ENCODE measurements at regions of chr2 and their contacts with region 1.

Region 1: DNA sequence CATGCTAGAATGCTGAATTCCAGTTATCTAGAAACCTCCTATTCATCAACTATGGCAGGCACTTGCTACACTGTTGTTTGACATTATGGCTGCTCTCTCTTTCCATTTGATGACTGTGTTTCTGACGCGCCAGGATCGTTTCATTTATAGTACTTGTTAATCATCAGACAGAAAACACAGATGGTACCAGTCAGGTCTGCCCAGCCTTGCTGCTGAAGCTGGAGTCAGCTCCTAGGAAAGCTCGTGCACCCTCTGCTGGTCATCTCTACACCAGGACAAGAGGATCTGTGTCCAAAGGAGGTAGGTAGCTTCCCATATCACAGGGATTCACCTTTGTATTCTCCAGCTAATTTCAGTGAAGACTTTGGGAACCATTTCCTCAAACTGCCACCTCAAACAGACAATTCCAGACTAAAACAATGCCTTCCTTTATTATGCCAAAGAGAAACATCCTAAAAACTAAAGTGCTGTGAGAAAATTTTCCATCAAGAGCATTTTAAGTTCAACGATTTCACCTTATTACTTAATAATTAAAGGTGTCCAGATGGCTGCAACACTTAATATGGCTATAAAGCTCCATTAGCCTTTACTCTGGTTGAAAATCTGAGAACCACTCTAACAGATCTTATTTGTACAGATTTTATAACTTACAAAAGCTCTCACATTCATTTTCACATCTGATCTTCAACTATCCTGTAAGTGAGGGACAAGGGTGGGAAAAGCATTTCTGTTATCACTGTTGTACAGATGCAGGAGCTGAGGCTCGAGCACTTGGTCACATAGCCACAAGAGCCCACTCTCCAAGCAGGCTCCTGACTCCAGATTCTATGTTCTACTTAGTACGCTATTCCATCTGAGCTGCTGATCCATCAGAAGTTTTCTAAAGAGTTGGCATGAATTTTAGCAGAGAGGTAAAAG is 17.5 kb downstream of the METTL8 start:
- DNase-seq: peak; percentile 96
- H3K4me3 Mint-ChIP-seq: peak overlapping the region; percentile 32
- H3K27ac Mint-ChIP-seq: peak overlapping the region; percentile 92
- H3K4me1 Mint-ChIP-seq: peaks cover 38% of the 10 kb centered on the region
- H3K27me3 Mint-ChIP-seq: no peaks in the 10 kb centered on the region

Region 2: GRCh38 chr2:171173089-171173488 is 243.2 kb before region 1 on chr2:
- CTCF ChIA-PET with region 1: interaction called, 3 read pairs
- intact Hi-C with region 1: loop called (anchors 1 kb)
- DNase-seq: peak; percentile 57
- H3K4me3 Mint-ChIP-seq: no peak overlapping the region
- H3K27ac Mint-ChIP-seq: no peak overlapping the region
- H3K4me1 Mint-ChIP-seq: peaks cover 14% of the 10 kb centered on the region
- H3K27me3 Mint-ChIP-seq: no peaks in the 10 kb centered on the region

Region 3: DNA sequence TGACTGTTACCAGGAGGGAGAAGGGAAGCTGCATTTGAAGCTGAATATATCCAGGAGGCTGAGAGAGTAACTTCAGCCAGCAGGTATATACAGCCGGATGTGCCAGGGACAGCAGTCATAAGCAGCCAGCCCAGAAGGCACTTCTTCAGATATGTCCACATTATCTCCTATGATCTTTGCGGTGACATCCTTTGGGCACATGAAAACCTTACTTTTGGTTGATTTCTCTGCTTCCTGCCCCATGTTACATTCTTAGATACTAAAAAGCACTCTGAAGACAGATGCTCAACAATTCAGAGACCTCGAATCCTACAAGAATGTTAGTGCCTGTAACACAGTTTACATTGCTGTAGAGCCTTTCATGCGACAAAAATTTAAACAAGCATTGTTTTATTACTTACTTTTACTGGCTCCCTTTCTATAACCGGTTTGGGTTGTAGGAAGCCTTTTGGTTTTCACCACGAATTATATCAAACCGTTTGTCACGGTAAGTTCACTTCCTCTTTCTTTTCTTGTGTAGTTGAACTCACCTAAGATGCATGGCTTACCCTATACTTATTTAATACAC is 205.3 kb before region 1 on chr2:
- CTCF ChIA-PET with region 1: no interaction called
- intact Hi-C with region 1: loop called (anchors 1 kb)
- DNase-seq: peak; percentile 60
- H3K4me3 Mint-ChIP-seq: peak overlapping the region; percentile 51
- H3K27ac Mint-ChIP-seq: peak overlapping the region; percentile 56
- H3K4me1 Mint-ChIP-seq: peaks cover 13% of the 10 kb centered on the region
- H3K27me3 Mint-ChIP-seq: no peaks in the 10 kb centered on the region

Region 4: DNA sequence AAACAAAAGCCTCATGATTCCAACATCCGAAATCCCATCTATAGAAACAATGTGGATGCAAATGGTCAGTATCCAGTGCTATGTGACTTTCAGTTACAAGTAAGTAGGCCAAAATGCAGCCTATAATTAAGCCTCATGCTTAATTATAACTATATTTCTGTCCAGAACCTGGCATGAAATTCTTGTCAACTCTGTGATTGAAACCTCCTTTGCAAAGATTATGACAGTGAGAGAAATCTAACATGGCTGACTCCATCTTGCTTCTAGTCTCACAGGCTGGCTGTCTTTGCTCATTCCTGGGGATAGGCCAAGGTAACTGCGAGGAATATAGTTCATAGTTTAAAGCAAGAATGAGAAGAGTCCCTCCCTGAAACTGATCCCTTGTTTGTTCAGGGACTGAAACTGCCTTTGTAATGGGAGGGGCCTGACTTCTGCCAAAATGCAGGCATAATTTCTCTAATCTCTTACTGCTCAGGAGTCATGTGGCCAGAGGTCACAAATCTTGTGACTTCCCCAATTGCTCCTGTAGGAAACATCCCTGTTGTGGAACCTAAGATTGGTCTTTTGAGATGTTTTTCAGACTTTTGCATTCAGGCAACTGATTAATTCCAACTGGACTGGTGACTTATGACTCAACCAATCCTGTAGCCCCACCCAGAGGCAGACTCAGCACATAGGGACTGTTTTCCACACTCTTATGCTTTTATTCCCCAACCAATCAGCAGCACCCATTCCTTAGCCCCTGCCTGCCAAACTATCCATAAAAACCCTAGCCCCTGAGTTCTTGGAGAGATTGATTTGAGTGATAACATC is 171.1 kb before region 1 on chr2:
- CTCF ChIA-PET with region 1: interaction called, 5 read pairs
- intact Hi-C with region 1: loop called (anchors 1 kb)
- DNase-seq: peak; percentile 32
- H3K4me3 Mint-ChIP-seq: no peak overlapping the region
- H3K27ac Mint-ChIP-seq: no peak overlapping the region
- H3K4me1 Mint-ChIP-seq: peaks cover 40% of the 10 kb centered on the region
- H3K27me3 Mint-ChIP-seq: no peaks in the 10 kb centered on the region

Region 5: DNA sequence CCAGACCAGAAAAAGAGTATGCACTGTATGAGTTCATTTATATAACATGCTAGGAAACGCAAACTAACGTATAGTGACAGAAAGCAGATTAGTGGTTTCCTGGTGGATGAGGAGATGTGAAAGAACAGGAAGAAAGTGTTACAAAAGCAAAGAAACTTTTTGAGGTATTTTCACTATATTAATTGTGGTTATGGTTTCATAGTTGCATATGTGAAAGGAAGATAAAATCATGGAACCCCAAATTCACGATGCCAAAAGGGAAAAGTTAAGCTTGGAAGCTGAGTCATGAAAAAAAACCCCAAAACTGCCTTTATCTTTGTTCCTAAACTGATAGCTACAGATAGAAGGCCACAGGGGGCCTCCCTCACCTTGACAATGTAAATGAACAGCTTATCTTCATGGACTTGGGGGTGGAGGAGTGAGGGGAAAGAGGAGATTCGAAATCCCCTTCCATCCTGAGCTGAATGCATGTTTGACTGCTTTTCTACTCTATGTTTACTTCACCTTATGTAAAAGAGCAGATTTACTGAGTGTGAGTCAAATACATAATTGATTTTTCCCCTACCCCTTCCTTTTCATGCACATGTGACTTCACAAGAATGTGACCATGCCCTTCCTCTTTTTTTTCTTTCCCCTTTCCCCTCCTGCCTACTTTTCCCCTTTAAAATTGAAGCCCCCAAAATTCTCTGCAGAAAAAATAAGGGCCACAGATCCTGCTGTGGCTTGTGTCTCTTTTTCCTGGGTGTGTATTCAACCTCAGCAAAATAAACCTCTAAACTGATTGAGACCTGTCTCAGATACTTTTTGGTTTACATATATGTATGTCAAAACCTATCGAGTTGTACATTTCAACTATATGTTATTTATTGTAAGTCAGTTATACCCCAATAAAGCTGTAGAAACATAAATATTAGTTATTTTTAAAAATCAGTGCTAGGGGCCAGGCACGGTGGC is 155.5 kb before region 1 on chr2:
- CTCF ChIA-PET with region 1: interaction called, 10 read pairs
- intact Hi-C with region 1: loop called (anchors 1 kb)
- DNase-seq: peak; percentile 70
- H3K4me3 Mint-ChIP-seq: no peak overlapping the region
- H3K27ac Mint-ChIP-seq: peak overlapping the region; percentile 44
- H3K4me1 Mint-ChIP-seq: peaks cover 35% of the 10 kb centered on the region
- H3K27me3 Mint-ChIP-seq: no peaks in the 10 kb centered on the region

Region 6: GRCh38 chr2:171433763-171434670 is 17.7 kb after region 1 on chr2 and contains the starts of genes DCAF17 and METTL8:
- CTCF ChIA-PET with region 1: interaction called, 7 read pairs
- intact Hi-C with region 1: loop called (anchors 1 kb)
- DNase-seq: peak; percentile 96
- H3K4me3 Mint-ChIP-seq: peak within 1 kb of the TSS; percentile 86
- H3K27ac Mint-ChIP-seq: peak within 1 kb of the TSS; percentile 94
- H3K4me1 Mint-ChIP-seq: peaks cover 54% of the 10 kb centered on the region
- H3K27me3 Mint-ChIP-seq: no peaks in the 10 kb centered on the region
- total RNA-seq, gene DCAF17: 21.1 to 21.3 TPM
- total RNA-seq, gene METTL8: 32.9 to 34.5 TPM

Region 7: DNA sequence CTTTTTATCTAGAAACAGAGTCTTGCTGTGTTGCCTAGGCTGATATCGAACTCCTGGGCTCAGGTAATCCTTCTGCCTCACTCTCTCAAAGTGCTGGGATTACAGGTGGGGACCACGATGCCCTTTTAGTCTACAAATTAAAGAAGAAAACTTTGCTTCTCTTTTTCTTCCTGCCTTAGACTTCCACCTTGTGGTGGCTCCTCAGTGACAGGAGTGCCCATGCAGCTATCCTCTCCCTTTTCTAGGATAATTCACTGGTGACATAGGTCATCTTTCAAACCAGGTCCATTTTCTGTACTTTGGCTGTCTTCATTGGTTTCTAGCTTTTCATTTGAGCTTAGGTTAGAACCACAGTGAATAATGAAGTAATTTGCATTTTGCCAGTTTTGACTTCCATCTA is 31.4 kb after region 1 on chr2:
- CTCF ChIA-PET with region 1: interaction called, 10 read pairs
- intact Hi-C with region 1: no loop called
- DNase-seq: peak; percentile 7
- H3K4me3 Mint-ChIP-seq: no peak overlapping the region
- H3K27ac Mint-ChIP-seq: no peak overlapping the region
- H3K4me1 Mint-ChIP-seq: no peaks in the 10 kb centered on the region
- H3K27me3 Mint-ChIP-seq: no peaks in the 10 kb centered on the region

Measured in activated naive CD4-positive, alpha-beta T cell treated with anti-CD3 and anti-CD28 coated beads for 36 hours (primary cell).